Activated CD4-positive, alpha-beta T cell treated with anti-CD3 and anti-CD28 coated beads, Interleukin-2, amount 10 ng/mL, durations not matched to agents 24 days and 14 days (primary cell): ENCODE measurements at regions of chr6 and their contacts with region 1.

Region 1: GRCh38 chr6:142913511-142914047 is 31.4 kb downstream of the HIVEP2 start:
- DNase-seq: peak; percentile 92
- H3K4me3 Mint-ChIP-seq: peak overlapping the region; percentile 82
- H3K27ac Mint-ChIP-seq: peak overlapping the region; percentile 94
- H3K4me1 Mint-ChIP-seq: peaks cover 62% of the 10 kb centered on the region
- H3K27me3 Mint-ChIP-seq: no peaks in the 10 kb centered on the region

Region 2: GRCh38 chr6:142802124-142802523 is 111.5 kb before region 1 on chr6:
- intact Hi-C with region 1: loop called (anchors 1 kb)
- DNase-seq: no peak
- H3K4me3 Mint-ChIP-seq: peak overlapping the region; percentile 52
- H3K27ac Mint-ChIP-seq: peak overlapping the region; percentile 82
- H3K4me1 Mint-ChIP-seq: peaks cover 54% of the 10 kb centered on the region
- H3K27me3 Mint-ChIP-seq: no peaks in the 10 kb centered on the region

Region 3: DNA sequence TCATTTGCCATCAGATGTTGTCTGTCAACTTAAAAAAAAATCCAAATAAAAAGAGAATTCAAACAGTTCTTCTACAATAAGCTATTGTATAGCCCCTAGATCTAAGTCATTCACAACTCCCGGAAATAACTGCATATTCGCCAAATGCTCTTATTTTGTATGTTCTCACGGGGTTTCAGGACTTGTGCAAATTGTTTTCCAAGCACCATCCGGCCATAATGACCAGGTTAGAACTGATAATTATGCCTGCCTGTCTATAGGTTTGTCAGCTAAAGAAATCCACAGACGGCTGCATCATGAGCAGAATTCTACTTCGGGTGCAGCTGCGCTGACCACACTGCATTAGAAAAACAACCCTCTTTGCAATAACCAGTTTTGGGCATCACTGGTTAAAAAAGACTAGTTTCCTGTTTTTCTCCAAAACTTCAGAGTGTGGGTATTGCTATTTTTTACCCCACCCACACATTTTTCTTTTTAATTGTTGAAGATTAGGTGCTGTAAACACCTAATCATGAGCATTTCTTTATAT is 56.3 kb before region 1 on chr6:
- intact Hi-C with region 1: loop called (anchors 1 kb)
- DNase-seq: peak; percentile 78
- H3K4me3 Mint-ChIP-seq: peak overlapping the region; percentile 83
- H3K27ac Mint-ChIP-seq: peak overlapping the region; percentile 97
- H3K4me1 Mint-ChIP-seq: peaks cover 81% of the 10 kb centered on the region
- H3K27me3 Mint-ChIP-seq: no peaks in the 10 kb centered on the region

Region 4: GRCh38 chr6:142885182-142885867 is 28.3 kb before region 1 on chr6:
- intact Hi-C with region 1: loop called (anchors 1 kb)
- DNase-seq: peak; percentile 86
- H3K4me3 Mint-ChIP-seq: peak overlapping the region; percentile 92
- H3K27ac Mint-ChIP-seq: peak overlapping the region; percentile 99
- H3K4me1 Mint-ChIP-seq: peaks cover 63% of the 10 kb centered on the region
- H3K27me3 Mint-ChIP-seq: no peaks in the 10 kb centered on the region

Region 5: GRCh38 chr6:142926494-142927270 is 13.1 kb after region 1 on chr6:
- intact Hi-C with region 1: loop called (anchors 1 kb)
- DNase-seq: peak; percentile 94
- H3K4me3 Mint-ChIP-seq: peak overlapping the region; percentile 95
- H3K27ac Mint-ChIP-seq: peak overlapping the region; percentile 92
- H3K4me1 Mint-ChIP-seq: peaks cover 43% of the 10 kb centered on the region
- H3K27me3 Mint-ChIP-seq: no peaks in the 10 kb centered on the region